GM10248 (cell line): ENCODE measurements at regions of chr5 and their contacts with region 1.

Region 1: DNA sequence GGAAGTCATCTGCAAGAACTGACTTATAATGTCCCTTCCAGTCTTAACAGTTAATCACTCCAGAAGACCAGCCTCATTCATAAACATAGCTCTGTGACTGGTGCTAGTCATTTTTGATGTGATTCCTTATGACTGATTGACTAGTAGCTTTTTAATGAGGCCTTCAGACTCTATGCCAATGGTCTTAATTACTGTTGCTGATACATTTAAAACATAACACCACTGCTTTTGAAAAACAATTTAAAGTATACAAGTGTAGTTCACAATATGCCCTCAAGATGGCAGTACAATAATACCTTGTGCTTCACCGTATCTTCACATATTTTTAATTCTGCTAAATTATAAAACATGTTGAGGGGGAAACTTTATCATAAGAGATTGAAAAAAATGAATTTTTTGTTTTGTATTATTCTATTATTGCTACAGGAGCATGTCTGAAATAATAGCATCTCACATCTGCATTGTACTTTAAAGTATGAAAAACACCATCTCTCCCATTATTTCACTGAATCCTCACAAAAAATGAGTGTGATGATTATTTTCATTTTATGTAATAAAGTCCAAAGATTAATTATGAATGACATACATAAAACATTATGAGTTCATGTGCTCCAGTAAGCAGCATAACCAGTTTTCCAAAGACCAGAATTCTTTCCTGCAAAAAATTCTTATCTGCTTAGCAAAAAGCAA is 55.2 kb upstream of the SHISAL2B start:
- DNase-seq: peak; percentile 15
- CTCF ChIP-seq: peak; percentile 83

Region 2: DNA sequence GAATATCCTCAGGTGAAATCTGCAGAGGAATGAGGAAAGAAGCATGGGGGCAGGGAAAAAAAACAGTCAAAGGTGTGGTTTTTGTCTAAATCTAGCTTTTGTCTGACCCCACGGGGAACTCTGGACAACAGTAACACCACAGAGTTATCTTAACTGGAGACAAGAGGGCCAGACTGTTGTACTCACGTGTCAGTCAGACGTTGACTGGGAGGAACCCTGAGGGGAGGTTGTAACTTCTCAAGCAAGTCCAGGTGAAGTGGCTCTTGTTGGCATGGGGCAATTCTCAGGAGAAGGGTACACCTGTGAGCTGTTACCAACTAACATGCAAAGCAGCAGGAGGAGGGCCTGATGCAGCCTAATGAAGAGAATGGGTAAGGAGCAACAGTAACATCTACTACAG is 11.0 kb after region 1 on chr5:
- CTCF ChIA-PET with region 1: interaction called, 64 read pairs
- POLR2A ChIA-PET with region 1: no interaction called
- DNase-seq: no peak
- CTCF ChIP-seq: no peak

Region 3: GRCh38 chr5:64784451-64785025 is 149.4 kb after region 1 on chr5:
- CTCF ChIA-PET with region 1: interaction called, 52 read pairs
- POLR2A ChIA-PET with region 1: no interaction called
- DNase-seq: peak; percentile 18
- CTCF ChIP-seq: peak; percentile 87